MCF 10A (cell line): ENCODE measurements at regions of chr1 and their contacts with region 1.

Region 1: DNA sequence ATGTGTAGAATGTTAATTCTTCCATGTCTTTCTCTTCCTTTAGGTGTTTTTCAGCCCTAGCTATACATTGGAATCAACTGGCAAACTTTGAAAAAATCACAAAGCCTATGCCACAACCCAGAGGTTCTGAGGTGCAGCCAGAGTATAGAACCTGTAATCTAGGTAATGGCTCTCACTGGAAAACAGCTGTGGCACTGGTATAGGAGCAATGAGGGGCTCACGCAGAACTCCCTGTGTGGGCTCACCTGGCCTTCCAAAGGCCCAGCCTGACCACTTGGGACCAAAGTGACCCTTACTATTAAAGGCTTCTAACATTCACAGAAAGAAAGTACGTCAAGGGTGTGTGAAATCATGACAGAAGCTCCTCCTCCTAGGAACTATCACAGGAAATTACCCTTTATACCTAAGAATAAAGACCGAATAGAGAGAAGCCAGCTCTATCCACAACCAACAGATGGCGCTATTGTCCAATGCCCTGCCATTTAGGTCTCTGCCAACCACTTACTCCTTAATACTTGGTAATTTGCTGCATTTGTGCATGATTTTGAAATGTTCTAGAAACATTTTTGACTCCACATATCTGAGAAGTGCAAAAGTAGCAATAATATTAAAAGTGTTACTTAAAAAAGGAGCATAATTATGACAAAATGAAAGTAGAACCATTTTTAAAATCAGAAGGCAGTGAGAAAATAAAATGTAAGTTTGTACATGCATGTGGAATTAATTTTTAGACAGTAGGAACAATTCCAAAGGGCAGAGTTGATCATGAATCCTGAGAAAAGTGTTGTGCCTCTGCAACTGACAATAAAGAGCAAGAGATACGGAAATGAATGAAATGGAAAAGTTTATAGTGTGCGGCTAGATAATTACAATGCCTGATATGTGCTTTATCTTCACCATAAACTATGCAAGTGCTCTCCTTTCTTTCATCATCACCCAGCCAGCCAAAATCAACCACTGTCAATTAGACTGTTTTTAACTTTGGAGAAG is 93.1 kb upstream of the HAO2 start:
- DNase-seq: peak; percentile 72
- H3K4me3 Mint-ChIP-seq: no peak overlapping the region
- H3K27ac Mint-ChIP-seq: no peak overlapping the region
- H3K4me1 Mint-ChIP-seq: peaks cover 18% of the 10 kb centered on the region
- H3K27me3 Mint-ChIP-seq: no peaks in the 10 kb centered on the region
- CTCF ChIP-seq: peak; percentile 85

Region 2: GRCh38 chr1:119008483-119009311 is 266.7 kb before region 1 on chr1:
- CTCF ChIA-PET with region 1: no interaction called
- POLR2A ChIA-PET with region 1: no interaction called
- intact Hi-C with region 1: loop called (anchors 10 kb)
- DNase-seq: peak; percentile 52
- H3K4me3 Mint-ChIP-seq: no peak overlapping the region
- H3K27ac Mint-ChIP-seq: peak overlapping the region; percentile 24
- H3K4me1 Mint-ChIP-seq: peaks cover 20% of the 10 kb centered on the region
- H3K27me3 Mint-ChIP-seq: no peaks in the 10 kb centered on the region
- CTCF ChIP-seq: peak; percentile 59

Region 3: DNA sequence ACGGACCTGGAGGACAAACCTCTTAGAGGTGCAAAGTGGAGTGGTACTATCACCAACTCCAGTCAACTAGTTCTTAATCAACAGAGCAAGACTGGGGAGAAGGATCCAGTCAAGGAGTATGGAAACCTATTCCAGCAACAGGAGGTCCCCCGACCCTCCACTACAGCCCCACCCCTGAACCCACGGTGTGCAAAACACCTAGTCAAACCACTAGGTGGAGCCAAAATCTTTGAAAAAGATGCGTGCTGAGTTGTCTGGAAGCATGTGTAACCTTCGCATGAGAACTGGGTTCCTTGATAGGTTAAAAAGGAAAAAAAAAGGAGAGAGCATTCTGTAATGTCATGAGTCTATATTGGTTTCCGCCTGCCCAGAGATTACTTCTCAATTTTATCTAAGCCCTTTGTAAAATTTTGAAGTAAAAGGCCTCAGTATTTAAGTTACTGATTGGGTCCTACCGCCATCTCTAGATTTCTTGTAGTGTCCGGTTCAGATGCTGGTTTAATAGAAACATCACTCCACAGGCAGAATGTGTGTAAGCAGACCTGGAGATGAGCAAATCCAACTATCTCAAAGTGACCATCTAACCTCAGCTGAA is 11.2 kb after region 1 on chr1:
- CTCF ChIA-PET with region 1: interaction called, 10 read pairs
- POLR2A ChIA-PET with region 1: no interaction called
- intact Hi-C with region 1: loop called (anchors 1 kb)
- DNase-seq: peak; percentile 70
- H3K4me3 Mint-ChIP-seq: no peak overlapping the region
- H3K27ac Mint-ChIP-seq: no peak overlapping the region
- H3K4me1 Mint-ChIP-seq: peaks cover 14% of the 10 kb centered on the region
- H3K27me3 Mint-ChIP-seq: peaks cover 4% of the 10 kb centered on the region
- CTCF ChIP-seq: peak; percentile 60

Region 4: DNA sequence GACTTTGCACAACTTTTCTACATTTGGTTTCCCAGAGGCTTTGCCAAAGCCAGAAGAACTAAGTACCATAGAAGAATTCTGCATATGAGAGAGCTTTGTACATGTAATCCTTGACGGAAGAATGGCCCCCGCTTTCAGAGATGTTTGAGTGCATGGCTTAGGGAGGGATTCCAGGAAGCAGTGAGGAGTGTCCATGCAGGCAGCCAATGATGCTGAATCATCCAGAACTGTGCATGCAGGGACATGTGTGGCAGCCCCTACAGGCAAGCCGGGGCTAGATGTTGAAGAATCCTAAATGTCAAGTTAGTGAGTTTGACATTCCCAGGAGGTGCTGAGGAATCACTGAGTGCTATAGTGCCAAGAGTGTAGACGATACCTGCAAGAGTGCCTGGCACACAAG is 83.2 kb after region 1 on chr1:
- CTCF ChIA-PET with region 1: interaction called, 116 read pairs
- POLR2A ChIA-PET with region 1: interaction called, 7 read pairs
- intact Hi-C with region 1: no loop called
- DNase-seq: peak; percentile 92
- H3K4me3 Mint-ChIP-seq: no peak overlapping the region
- H3K27ac Mint-ChIP-seq: peak overlapping the region; percentile 32
- H3K4me1 Mint-ChIP-seq: peaks cover 10% of the 10 kb centered on the region
- H3K27me3 Mint-ChIP-seq: no peaks in the 10 kb centered on the region
- CTCF ChIP-seq: no peak